Activated CD4-positive, alpha-beta memory T cell treated with anti-CD3 and anti-CD28 coated beads, Interleukin-2, amount 10 ng/mL, durations not matched to agents 7 days and 5 days (primary cell): ENCODE measurements at regions of chr2 and their contacts with region 1.

Region 1: DNA sequence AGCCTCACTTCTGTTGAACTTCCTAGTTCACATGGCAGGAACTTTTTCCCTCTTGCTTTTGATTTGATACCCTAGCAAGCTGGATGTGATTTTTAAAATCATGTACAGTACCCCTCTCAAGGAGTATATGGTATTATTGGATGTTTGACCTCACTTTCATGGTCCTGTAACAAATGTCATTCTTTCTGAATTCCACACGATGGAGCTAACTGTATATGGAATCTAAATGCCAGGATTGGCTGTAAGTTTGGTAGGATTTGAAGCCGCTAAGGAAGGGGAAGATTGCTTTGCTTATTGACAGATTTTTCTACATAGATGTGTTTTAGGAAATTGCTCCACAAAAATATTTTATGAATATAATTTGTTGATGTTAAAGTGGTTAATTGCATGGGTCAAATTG is 18.3 kb downstream of the MAIP1 start:
- DNase-seq: no peak
- H3K4me3 Mint-ChIP-seq: no peak overlapping the region
- H3K27ac Mint-ChIP-seq: no peak overlapping the region
- H3K4me1 Mint-ChIP-seq: peaks cover 12% of the 10 kb centered on the region
- H3K27me3 Mint-ChIP-seq: no peaks in the 10 kb centered on the region

Region 2: GRCh38 chr2:199940373-199940772 is 33.3 kb before region 1 on chr2:
- CTCF ChIA-PET with region 1: no interaction called
- POLR2A ChIA-PET with region 1: no interaction called
- DNase-seq: no peak
- H3K4me3 Mint-ChIP-seq: no peak overlapping the region
- H3K27ac Mint-ChIP-seq: no peak overlapping the region
- H3K4me1 Mint-ChIP-seq: peaks cover 15% of the 10 kb centered on the region
- H3K27me3 Mint-ChIP-seq: no peaks in the 10 kb centered on the region

Region 3: DNA sequence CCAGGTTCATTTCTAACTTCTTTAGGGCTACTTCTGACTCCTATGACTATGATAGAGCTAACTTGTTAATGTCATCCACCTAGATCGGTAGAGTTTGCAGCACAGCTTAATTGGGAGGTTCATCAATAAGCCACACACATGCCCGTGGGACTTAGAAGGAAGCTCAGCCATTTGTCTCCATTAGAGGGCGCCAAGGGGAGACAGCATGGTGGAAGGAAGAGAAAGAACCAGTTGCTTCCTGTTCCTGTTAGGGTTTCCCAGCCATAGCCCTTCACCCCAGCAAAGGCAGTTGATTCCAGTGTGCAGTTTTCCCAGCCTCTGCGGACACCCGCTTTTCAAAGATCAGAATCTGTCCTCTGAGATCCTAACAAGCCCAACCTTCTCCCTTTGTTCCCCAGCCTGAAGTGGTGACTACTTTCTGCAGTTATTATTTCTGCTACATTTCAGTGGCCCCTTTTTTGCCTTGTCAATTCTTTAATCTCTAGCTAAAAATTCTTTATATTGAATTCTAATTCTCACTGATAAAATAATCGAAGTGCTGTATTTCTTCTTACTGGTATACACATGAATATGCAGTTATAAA is 12.0 kb after region 1 on chr2:
- CTCF ChIA-PET with region 1: interaction called, 20 read pairs
- POLR2A ChIA-PET with region 1: no interaction called
- DNase-seq: peak; percentile 68
- H3K4me3 Mint-ChIP-seq: no peak overlapping the region
- H3K27ac Mint-ChIP-seq: no peak overlapping the region
- H3K4me1 Mint-ChIP-seq: peaks cover 7% of the 10 kb centered on the region
- H3K27me3 Mint-ChIP-seq: no peaks in the 10 kb centered on the region